SK-N-SH (cell line): ENCODE measurements at regions of chr1 and their contacts with region 1.

Region 1: GRCh38 chr1:90579212-90579802 is 137.8 kb downstream of the BARHL2 start:
- DNase-seq: peak; percentile 45
- H3K4me3 ChIP-seq: no peak overlapping the region
- H3K27ac ChIP-seq: no peak overlapping the region
- H3K4me1 ChIP-seq: no peaks in the 10 kb centered on the region
- H3K27me3 ChIP-seq: no peaks in the 10 kb centered on the region; the same call in 1 of the 2 replicates
- CTCF ChIP-seq: peak; percentile 78
- EP300 ChIP-seq: no peak
- RAD21 ChIP-seq: peak; percentile 63

Region 2: DNA sequence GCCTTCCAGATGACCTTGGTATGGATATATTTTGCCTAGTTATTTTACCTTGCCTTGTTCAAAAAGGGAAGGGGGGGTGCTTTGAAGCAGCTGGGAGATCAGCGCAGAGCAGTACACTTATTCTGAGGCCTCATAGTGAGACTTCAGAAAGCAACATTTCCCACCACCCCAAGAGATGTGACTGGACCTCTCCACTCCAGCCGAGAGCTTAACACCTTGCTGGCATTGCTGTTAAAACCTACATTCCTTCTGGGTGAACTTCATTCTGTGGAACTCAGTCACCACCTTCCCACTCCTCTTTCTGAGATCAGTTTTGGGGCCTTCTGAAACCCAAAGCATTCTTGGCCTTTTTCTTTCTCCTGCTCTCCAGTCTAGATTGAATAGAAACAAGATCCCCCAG is 10.9 kb before region 1 on chr1:
- CTCF ChIA-PET with region 1: interaction called, 49 read pairs
- POLR2A ChIA-PET with region 1: no interaction called
- DNase-seq: no peak
- H3K4me3 ChIP-seq: no peak overlapping the region
- H3K27ac ChIP-seq: no peak overlapping the region
- H3K4me1 ChIP-seq: no peaks in the 10 kb centered on the region
- H3K27me3 ChIP-seq: peaks cover 12% of the 10 kb centered on the region; the same call in 1 of the 2 replicates
- CTCF ChIP-seq: no peak
- EP300 ChIP-seq: no peak
- RAD21 ChIP-seq: no peak